MCF 10A (cell line): ENCODE measurements at regions of chr1 and their contacts with region 1.

Region 1: DNA sequence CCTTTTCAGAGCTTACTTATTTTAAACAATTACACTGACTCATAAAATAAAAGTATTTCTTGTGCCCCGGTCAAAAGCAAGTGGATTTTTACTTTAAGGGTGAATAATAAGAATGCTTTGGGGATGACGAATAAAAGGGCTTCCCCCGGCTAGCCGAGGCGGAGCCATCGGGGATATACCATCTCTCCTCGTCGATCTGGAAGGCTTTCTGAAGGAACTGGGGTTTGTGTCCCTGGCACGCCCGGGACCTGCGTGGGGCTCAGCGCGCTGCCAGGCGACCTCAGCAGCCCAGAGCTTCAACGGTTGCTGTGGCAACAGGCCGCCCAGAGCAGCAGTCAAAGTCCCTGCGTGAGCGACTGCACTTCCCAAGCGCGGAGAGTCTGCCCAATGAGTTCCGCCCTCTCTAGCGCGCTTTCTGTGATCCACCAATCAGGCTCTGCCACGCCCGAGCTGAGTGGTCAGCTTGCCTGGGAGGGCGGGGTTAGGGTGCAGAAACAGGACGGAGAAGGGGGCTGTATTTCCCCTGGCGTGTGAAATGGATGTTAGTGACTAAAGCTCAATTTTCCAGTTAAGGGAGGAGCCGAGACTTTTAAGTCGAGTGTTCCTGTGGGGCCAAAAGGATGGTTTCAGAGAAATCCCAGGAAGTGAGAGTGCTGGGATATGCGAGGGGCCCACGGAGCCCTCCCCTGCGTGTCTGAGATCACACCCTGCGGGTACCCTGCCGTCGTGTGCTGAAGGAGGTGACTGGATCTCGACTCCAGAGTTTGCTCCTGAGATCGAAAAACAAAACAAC is 33.0 kb upstream of the MGST3 start:
- DNase-seq: peak; percentile 99
- H3K4me3 Mint-ChIP-seq: peak overlapping the region; percentile 89
- H3K27ac Mint-ChIP-seq: peak overlapping the region; percentile 95
- H3K4me1 Mint-ChIP-seq: peaks cover 23% of the 10 kb centered on the region
- H3K27me3 Mint-ChIP-seq: peaks cover 27% of the 10 kb centered on the region
- CTCF ChIP-seq: no peak

Region 2: DNA sequence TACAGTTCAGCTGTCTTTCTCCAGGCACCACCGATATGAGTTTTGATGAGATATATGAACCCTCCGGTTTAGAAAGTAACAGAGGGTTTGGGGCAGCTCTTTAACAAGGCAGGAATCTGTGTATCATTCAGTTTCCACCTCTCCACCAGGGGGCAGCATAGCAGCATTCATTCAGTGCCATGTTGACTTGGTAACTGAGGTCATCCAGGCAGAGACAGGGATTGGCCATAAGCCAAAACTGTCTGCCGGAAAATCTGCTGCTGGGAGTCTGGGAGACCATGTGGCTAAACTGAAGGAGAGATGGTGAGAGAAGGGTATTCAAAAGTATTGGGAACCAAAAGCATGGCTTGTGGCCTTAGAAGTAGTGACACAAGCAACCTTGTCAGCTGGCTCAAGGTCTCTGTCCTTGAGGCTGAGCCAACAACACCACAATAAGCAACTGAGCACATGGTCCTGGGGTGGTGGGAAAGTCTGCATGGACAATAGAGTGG is 340.1 kb before region 1 on chr1:
- CTCF ChIA-PET with region 1: interaction called, 48 read pairs
- POLR2A ChIA-PET with region 1: no interaction called
- intact Hi-C with region 1: loop called (anchors 1 kb)
- DNase-seq: peak; percentile 97
- H3K4me3 Mint-ChIP-seq: no peak overlapping the region
- H3K27ac Mint-ChIP-seq: no peak overlapping the region
- H3K4me1 Mint-ChIP-seq: peaks cover 11% of the 10 kb centered on the region
- H3K27me3 Mint-ChIP-seq: peaks cover 45% of the 10 kb centered on the region
- CTCF ChIP-seq: peak; percentile 94

Region 3: GRCh38 chr1:165330483-165330882 is 267.6 kb before region 1 on chr1:
- CTCF ChIA-PET with region 1: no interaction called
- POLR2A ChIA-PET with region 1: no interaction called
- intact Hi-C with region 1: no loop called
- DNase-seq: no peak
- H3K4me3 Mint-ChIP-seq: no peak overlapping the region
- H3K27ac Mint-ChIP-seq: no peak overlapping the region
- H3K4me1 Mint-ChIP-seq: no peaks in the 10 kb centered on the region
- H3K27me3 Mint-ChIP-seq: peaks cover 32% of the 10 kb centered on the region
- CTCF ChIP-seq: no peak

Region 4: GRCh38 chr1:165481820-165482532 is 116.1 kb before region 1 on chr1:
- CTCF ChIA-PET with region 1: interaction called, 5 read pairs
- POLR2A ChIA-PET with region 1: no interaction called
- intact Hi-C with region 1: loop called (anchors 2 kb)
- DNase-seq: peak; percentile 99
- H3K4me3 Mint-ChIP-seq: no peak overlapping the region
- H3K27ac Mint-ChIP-seq: peak overlapping the region; percentile 7
- H3K4me1 Mint-ChIP-seq: peaks cover 14% of the 10 kb centered on the region
- H3K27me3 Mint-ChIP-seq: peaks cover 43% of the 10 kb centered on the region
- CTCF ChIP-seq: no peak

Region 5: GRCh38 chr1:165630629-165631341 is 32.7 kb after region 1 on chr1 and contains the start of gene MGST3:
- CTCF ChIA-PET with region 1: interaction called, 31 read pairs
- POLR2A ChIA-PET with region 1: interaction called, 104 read pairs
- intact Hi-C with region 1: loop called (anchors 1 kb)
- DNase-seq: peak; percentile 99
- H3K4me3 Mint-ChIP-seq: no peak within 1 kb of the TSS
- H3K27ac Mint-ChIP-seq: no peak within 1 kb of the TSS
- H3K4me1 Mint-ChIP-seq: peaks cover 22% of the 10 kb centered on the region
- H3K27me3 Mint-ChIP-seq: no peaks in the 10 kb centered on the region
- CTCF ChIP-seq: no peak
- total RNA-seq, gene MGST3: 75.5 and 97.1 TPM in 2 replicates

Region 6: GRCh38 chr1:165712764-165713163 is 114.7 kb after region 1 on chr1:
- CTCF ChIA-PET with region 1: interaction called, 19 read pairs
- POLR2A ChIA-PET with region 1: no interaction called
- intact Hi-C with region 1: no loop called
- DNase-seq: no peak
- H3K4me3 Mint-ChIP-seq: no peak overlapping the region
- H3K27ac Mint-ChIP-seq: no peak overlapping the region
- H3K4me1 Mint-ChIP-seq: no peaks in the 10 kb centered on the region
- H3K27me3 Mint-ChIP-seq: peaks cover 6% of the 10 kb centered on the region
- CTCF ChIP-seq: no peak

Region 7: GRCh38 chr1:165907256-165907857 is 309.3 kb after region 1 on chr1:
- CTCF ChIA-PET with region 1: interaction called, 161 read pairs
- POLR2A ChIA-PET with region 1: interaction called, 3 read pairs
- intact Hi-C with region 1: no loop called
- DNase-seq: no peak
- H3K4me3 Mint-ChIP-seq: no peak overlapping the region
- H3K27ac Mint-ChIP-seq: no peak overlapping the region
- H3K4me1 Mint-ChIP-seq: peaks cover 18% of the 10 kb centered on the region
- H3K27me3 Mint-ChIP-seq: no peaks in the 10 kb centered on the region
- CTCF ChIP-seq: no peak

Region 8: GRCh38 chr1:166133276-166133841 is 535.3 kb after region 1 on chr1:
- CTCF ChIA-PET with region 1: no interaction called
- POLR2A ChIA-PET with region 1: no interaction called
- intact Hi-C with region 1: no loop called
- DNase-seq: peak; percentile 68
- H3K4me3 Mint-ChIP-seq: no peak overlapping the region
- H3K27ac Mint-ChIP-seq: no peak overlapping the region
- H3K4me1 Mint-ChIP-seq: no peaks in the 10 kb centered on the region
- H3K27me3 Mint-ChIP-seq: peaks cover 17% of the 10 kb centered on the region
- CTCF ChIP-seq: peak; percentile 83